Activated CD8-positive, alpha-beta memory T cell treated with anti-CD3 and anti-CD28 coated beads, Interleukin-2, amount 10 ng/mL, durations not matched to agents 7 days and 5 days (primary cell): ENCODE measurements at regions of chr2 and their contacts with region 1.

Region 1: GRCh38 chr2:46915811-46916630 is 415 bp upstream of the MCFD2 start:
- DNase-seq: peak; percentile 84
- ATAC-seq: peak; percentile 89
- H3K4me3 Mint-ChIP-seq: peak overlapping the region; percentile 92
- H3K27ac Mint-ChIP-seq: peak overlapping the region; percentile 71
- H3K4me1 Mint-ChIP-seq: peaks cover 43% of the 10 kb centered on the region
- H3K27me3 Mint-ChIP-seq: no peaks in the 10 kb centered on the region

Region 2: GRCh38 chr2:46929612-46930011 is 13.6 kb after region 1 on chr2:
- CTCF ChIA-PET with region 1: interaction called, 15 read pairs
- DNase-seq: no peak
- ATAC-seq: no peak
- H3K4me3 Mint-ChIP-seq: no peak overlapping the region
- H3K27ac Mint-ChIP-seq: no peak overlapping the region
- H3K4me1 Mint-ChIP-seq: no peaks in the 10 kb centered on the region
- H3K27me3 Mint-ChIP-seq: no peaks in the 10 kb centered on the region

Region 3: GRCh38 chr2:46937471-46937901 is 21.5 kb after region 1 on chr2:
- CTCF ChIA-PET with region 1: interaction called, 17 read pairs
- DNase-seq: no peak
- ATAC-seq: no peak
- H3K4me3 Mint-ChIP-seq: no peak overlapping the region
- H3K27ac Mint-ChIP-seq: no peak overlapping the region
- H3K4me1 Mint-ChIP-seq: peaks cover 12% of the 10 kb centered on the region
- H3K27me3 Mint-ChIP-seq: no peaks in the 10 kb centered on the region